Heart right ventricle (tissue), 16 donors: ENCODE measurements at regions of chr7 and their contacts with region 1.

Region 1: DNA sequence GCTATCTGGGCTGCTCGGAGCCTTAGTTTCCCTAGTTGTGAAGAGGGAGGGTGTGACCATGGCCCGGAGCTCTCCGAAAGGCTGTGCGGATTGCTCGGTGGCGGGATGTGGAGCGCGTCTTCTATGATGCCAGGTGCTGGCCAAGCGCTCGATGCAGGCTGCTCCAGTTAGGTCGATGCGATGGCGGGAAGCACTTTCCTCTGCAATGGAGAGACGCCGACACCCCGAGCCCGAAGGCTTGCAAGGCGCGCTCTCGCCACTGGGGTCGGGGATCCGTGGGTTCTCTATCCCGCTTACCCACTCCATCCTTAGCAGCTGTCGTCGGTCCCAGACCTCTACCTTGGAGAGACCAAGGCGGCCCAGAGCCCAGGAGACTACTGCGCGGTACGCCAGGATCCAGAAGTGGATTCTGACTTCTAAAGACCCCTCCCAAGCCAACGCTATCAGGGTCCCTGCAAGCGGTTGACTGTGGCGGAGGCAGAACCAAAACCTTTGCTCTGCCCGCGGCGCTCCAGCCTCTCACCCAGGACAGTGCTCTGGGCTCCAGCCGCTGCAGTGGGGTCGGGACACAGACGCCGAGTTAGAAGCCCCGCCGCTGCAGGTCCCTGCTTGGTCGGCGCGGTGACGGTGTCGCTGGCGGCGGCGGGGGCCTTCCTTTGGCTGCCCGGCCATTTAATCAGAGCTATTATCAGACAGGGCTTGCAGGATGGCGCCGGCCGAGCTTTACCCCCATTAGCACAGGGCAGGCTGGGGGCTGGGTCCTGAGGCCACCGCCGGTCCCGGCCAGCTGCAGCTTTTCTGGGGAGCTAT is 7.8 kb upstream of the TBX20 start:
- DNase-seq: peak in 1 of 2 donors; percentile 31
- ATAC-seq: peak in 7 of 8 donors; percentile 1 to 38 (median 15)
- H3K4me3 ChIP-seq: peak overlapping the region in 9 of 10 donors; percentile 10 to 42 (median 33)
- H3K27ac ChIP-seq: peak overlapping the region in 7 of 10 donors; percentile 33 to 96 (median 67)
- H3K4me1 ChIP-seq: peaks cover 0 to 44% (median 16%) of the 10 kb centered on the region in 9 donors
- H3K27me3 ChIP-seq: peaks cover 0 to 87% (median 50%) of the 10 kb centered on the region in 7 donors
- CTCF ChIP-seq: peak in 2 of 9 donors; percentile 3 to 9

Region 2: DNA sequence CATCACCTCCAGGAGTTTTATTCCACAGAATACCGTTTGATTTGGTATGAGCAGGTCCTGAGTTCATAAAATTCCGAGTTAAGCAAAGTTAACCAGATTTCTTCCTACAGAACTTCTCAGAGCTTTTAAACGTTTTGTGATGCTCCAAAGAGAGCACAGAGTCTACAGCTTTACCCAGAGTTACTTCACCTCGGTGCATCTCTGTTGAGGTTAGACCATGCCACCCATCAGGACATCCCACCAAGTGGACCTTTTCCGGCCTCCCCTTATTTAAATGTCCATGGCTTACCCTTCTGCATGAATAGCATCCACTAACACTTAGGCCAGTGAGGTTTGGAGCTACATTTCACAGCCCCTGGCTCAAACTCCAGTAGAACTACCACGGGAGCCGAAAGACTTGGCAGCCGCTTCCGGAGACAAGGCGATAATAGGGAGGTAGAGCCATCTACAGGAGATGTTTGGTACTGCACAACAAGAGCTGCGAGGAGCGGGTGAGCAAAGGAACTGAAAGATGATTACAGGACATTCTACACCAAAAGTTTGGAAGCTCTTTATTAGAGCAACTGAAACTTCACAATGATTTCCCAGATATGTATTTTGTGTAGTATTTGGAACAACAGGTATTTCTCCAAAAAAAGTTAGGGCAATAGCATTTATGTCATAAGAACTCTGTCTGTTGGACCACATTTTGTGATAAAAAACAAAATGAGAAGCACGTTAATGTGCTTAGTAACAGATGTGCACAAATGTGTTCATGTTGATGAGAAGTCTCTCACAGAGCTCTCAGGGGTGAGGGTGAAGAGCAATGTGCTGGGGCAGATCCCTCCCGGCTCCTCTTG is 258.5 kb after region 1 on chr7:
- intact Hi-C with region 1: loop called in 2 of 10 experiments (anchors 10 kb)
- DNase-seq: peak; percentile 71 to 86
- ATAC-seq: peak; percentile 80 to 91 (median 86)
- H3K4me3 ChIP-seq: no peak overlapping the region
- H3K27ac ChIP-seq: peak overlapping the region in 3 of 10 donors; percentile 40 to 41 (median 40)
- H3K4me1 ChIP-seq: peaks cover 0 to 24% (median 20%) of the 10 kb centered on the region in 9 donors
- H3K27me3 ChIP-seq: peaks cover 0 to 8% (median 0%) of the 10 kb centered on the region in 7 donors
- CTCF ChIP-seq: peak; percentile 69 to 92 (median 88)